Activated T-helper 1 cell treated with anti-CD3 and anti-CD28 coated beads, Interleukin-12 subunit alpha, Interleukin-12 subunit beta, Interleukin-2, Interleukin-4 antibody, amounts not matched to agents 30 ng/mL and 10 ng/mL and 1 ng/mL, durations not matched to agents 14 hours and 24 hours and 36 hours (primary cell): ENCODE measurements at regions of chr11 and their contacts with region 1.

Region 1: DNA sequence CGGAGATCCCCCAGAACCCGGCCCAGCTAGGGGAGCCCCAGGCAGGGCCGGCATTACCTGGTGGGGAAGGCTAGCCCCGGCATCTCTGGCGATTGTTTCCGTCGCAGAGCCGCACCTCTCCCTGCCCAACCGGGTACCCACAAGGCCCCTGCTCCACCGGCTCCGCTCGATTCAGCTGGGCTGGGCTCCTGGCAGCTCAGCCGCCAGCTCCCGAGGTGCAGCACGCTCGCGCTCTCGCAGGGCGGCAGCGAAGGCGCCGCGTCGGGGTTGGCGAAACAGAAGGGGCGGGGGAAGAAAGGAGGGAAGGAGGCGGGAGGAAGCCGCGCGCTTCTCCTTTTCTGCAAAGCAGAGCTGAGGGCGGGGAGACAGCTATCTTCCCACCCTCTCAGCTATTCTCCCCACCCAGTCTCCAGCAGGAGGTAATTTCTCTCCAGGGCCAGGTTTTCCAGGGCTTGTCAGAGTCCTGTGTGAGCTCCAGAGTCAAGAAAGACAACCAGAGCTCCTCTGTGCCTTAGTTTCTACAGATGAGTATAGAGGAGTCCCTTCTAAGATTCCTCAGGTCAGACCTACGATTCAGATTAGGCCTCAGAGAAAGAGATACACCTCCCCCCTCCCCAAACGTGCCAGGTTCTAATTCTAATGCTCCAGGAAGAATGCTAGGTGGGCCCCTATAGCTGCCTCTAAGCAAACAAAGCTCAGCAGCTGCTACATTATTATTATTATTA is 62.0 kb downstream of the PAK1 start:
- DNase-seq: peak; percentile 80
- H3K4me3 Mint-ChIP-seq: peak overlapping the region; percentile 88
- H3K27ac Mint-ChIP-seq: peak overlapping the region; percentile 82
- H3K4me1 Mint-ChIP-seq: peaks cover 46% of the 10 kb centered on the region
- H3K27me3 Mint-ChIP-seq: no peaks in the 10 kb centered on the region

Region 2: DNA sequence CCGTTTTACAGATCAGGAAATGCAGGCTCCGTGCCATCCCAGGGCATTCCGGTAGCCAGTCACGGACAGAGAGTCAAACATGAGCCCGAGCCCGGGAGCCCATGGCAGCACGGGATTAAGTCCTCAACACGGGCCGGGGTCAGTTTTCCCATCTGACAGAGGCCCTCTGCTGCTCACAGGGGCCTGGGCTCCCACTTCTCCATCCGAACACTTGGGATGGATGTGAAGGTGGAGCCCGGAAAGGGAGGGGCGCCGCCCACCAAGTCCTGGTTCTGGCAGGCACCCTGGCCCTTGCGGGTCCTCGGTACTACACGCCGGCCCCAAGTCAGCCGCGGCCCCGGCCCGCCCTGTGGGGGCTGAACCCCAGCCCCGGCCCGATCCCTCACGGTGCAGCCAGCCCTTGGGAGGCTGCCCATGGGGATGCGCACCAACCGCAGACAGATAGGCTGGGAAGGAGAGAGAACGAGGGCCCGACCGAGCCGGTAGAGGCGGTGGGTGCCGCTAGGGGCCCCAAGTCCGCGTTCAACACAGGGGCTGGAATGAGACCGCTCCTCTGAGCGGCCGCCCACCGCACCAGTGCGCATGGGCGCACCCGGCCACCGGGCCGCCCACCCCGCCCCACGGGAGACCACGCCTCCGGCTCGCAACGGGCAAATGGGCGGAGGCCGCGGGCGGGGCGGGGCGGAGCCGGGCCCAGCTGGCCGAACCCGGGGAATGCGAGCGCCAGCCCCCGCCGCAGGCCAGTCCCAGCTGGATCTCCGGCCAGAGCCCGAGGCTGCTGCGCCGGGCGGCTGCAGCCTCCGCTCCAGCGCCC is 345.4 kb before region 1 on chr11 and contains the start of gene CAPN5:
- intact Hi-C with region 1: loop called (anchors 10 kb)
- DNase-seq: peak; percentile 80
- H3K4me3 Mint-ChIP-seq: peak within 1 kb of the TSS; percentile 86
- H3K27ac Mint-ChIP-seq: no peak within 1 kb of the TSS
- H3K4me1 Mint-ChIP-seq: no peaks in the 10 kb centered on the region
- H3K27me3 Mint-ChIP-seq: peaks cover 27% of the 10 kb centered on the region
- total RNA-seq, gene CAPN5: 0.10 and 0.32 TPM in 2 replicates

Region 3: DNA sequence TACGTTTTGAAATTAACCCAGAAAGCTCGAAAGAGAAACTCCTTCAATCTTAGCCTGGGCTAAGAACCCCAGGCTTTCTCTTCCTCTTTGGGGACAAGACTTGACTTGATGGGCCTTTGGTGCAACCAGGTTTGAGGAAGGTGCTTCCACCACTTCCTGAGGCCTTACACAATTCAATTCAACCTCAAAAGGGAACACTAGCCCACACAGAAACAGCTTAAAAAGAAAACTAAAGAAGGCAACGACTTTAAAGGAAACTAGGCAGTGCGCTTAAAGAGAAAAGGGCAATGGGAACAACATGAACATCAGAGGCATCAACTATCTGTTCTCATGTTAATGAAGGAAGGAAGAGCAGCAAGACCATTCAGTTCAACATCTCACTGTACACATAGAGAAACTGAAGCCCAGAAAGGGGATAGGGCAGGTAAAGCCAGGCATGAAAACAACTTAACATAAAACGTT is 37.2 kb after region 1 on chr11:
- intact Hi-C with region 1: no loop called
- DNase-seq: no peak
- H3K4me3 Mint-ChIP-seq: peak overlapping the region; percentile 27
- H3K27ac Mint-ChIP-seq: peak overlapping the region; percentile 36
- H3K4me1 Mint-ChIP-seq: peaks cover 42% of the 10 kb centered on the region
- H3K27me3 Mint-ChIP-seq: peaks cover 6% of the 10 kb centered on the region

Region 4: DNA sequence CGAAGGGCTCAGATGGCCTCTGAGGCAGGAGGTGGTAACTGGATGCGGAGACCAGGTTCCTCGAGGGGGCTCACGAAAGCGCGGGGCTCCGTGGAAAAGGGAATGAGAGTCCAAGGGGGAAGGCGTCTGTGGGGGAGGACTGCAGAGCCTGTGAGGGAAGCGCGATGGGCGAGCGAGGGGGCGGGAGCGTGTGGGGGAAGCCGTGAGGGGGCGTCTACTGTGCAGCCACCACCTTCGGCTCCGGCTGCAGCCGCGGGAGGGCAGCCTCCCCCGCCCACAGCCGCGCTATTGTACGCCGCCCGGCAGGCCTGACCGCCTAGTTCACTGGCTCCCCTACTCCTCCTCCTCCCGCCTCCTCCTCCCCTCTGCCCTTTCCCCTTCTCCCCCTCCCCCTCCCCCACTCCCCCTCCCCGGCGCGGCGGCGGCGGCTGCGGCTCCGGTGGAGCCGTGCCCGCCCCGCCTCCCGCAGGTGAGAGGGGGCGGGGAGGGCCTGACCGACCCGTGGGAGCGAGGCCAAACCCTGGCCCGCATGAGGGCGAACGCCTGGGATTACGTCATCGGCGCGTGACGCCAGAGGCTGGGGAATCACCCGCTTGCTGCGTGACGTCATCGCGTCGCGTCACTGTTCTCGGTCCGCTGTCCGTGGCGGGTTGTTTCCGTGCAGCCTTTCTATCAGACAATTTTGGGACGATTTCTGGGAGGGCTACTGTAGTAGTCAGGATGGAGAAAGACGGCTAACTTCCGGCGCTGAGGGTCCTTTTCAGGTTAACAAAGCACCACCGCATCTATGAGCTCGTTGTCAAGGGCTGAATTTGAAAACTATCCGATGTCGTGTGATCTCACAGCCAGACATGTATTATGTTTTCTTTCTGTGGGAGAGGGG is 62.2 kb after region 1 on chr11 and contains the start of gene PAK1:
- intact Hi-C with region 1: loop called (anchors 2 kb)
- DNase-seq: peak; percentile 81
- H3K4me3 Mint-ChIP-seq: peak within 1 kb of the TSS; percentile 79
- H3K27ac Mint-ChIP-seq: peak within 1 kb of the TSS; percentile 74
- H3K4me1 Mint-ChIP-seq: peaks cover 27% of the 10 kb centered on the region
- H3K27me3 Mint-ChIP-seq: peaks cover 25% of the 10 kb centered on the region
- total RNA-seq, gene PAK1: 33.1 and 38.4 TPM in 2 replicates

Region 5: GRCh38 chr11:77547863-77548551 is 136.1 kb after region 1 on chr11:
- intact Hi-C with region 1: loop called (anchors 10 kb)
- DNase-seq: peak; percentile 8
- H3K4me3 Mint-ChIP-seq: no peak overlapping the region
- H3K27ac Mint-ChIP-seq: no peak overlapping the region
- H3K4me1 Mint-ChIP-seq: no peaks in the 10 kb centered on the region
- H3K27me3 Mint-ChIP-seq: no peaks in the 10 kb centered on the region

Region 6: DNA sequence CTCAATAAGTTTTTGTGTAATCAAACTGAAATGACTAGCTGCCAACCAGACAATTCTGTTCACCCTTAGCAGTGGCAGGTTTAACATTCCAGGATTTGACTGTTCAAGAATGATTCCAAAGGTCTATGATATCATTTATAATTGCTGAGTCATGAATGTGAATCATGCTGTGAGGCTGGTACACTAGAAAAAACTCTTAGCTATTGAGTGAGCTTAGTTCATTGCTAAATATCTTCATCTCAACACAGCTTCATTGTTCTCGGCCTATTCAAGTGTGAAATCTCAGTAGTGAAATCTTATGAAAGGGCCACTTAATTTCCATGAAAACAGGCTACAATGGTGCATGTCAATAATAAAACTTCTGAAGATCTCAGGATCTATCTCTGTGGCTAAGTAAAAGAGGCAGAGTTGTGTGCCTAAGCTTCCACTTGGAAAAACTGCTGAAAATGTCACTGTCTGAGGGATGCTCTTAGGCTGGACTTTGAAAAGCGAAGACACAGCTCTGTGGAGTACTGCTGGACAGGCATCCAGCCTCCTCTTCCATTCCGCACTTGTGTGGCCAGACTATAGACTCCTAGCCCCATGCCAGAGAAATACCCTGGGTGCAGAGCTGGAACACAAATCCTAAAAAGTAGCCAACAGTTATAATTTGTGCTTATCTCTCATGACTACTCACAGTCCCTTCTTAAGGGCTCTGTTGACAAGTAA is 190.7 kb after region 1 on chr11:
- intact Hi-C with region 1: no loop called
- DNase-seq: no peak
- H3K4me3 Mint-ChIP-seq: no peak overlapping the region
- H3K27ac Mint-ChIP-seq: no peak overlapping the region
- H3K4me1 Mint-ChIP-seq: no peaks in the 10 kb centered on the region
- H3K27me3 Mint-ChIP-seq: no peaks in the 10 kb centered on the region

Region 7: GRCh38 chr11:77619576-77620198 is 207.8 kb after region 1 on chr11:
- intact Hi-C with region 1: loop called (anchors 10 kb)
- DNase-seq: peak; percentile 5
- H3K4me3 Mint-ChIP-seq: no peak overlapping the region
- H3K27ac Mint-ChIP-seq: no peak overlapping the region
- H3K4me1 Mint-ChIP-seq: no peaks in the 10 kb centered on the region
- H3K27me3 Mint-ChIP-seq: no peaks in the 10 kb centered on the region